Pancreas (tissue), 10 donors: ENCODE measurements at regions of chr1 and their contacts with region 1.

Region 1: DNA sequence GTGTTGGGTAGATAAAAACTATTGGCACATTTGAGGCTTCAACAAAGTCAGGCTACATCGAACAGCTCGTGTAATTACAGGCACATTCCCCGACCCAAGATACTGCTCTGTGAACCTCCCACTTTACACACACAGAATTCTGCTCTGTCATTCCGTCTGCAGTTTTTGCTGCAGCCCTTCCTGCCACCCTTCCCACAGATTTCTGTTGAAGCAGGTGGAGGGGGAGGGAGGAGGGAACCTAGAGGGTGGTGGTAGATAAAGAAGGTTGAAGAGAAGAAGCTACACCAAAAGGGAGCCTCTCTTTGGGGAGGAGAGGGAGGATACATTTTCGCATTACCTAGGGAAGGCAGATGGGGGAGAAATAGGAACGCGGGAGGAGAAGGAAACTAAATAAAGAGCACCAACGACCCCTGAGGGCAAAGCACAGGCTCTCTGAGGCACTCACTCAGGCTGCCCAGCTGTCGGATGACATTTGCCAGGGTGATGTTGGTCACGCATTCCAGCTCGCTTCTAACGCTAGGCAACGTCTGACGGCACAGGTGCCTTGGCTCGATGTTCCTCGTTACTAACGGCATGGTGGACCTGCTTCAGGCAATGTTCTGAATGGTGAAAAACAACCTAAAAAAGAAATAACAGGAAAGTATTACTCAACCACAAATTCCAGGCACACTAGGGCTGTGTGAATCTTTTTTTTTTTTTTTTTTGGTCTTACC is 36.0 kb downstream of the GPR3 start:
- DNase-seq: no peak
- ATAC-seq: peak in 3 of 4 donors; percentile 37 to 72 (median 70)
- H3K4me3 ChIP-seq: no peak overlapping the region
- H3K27ac ChIP-seq: no peak overlapping the region
- H3K4me1 ChIP-seq: peaks cover under 1 to 25% (median 6%) of the 10 kb centered on the region in 3 donors
- H3K27me3 ChIP-seq: no peaks in the 10 kb centered on the region
- CTCF ChIP-seq: no peak

Region 2: DNA sequence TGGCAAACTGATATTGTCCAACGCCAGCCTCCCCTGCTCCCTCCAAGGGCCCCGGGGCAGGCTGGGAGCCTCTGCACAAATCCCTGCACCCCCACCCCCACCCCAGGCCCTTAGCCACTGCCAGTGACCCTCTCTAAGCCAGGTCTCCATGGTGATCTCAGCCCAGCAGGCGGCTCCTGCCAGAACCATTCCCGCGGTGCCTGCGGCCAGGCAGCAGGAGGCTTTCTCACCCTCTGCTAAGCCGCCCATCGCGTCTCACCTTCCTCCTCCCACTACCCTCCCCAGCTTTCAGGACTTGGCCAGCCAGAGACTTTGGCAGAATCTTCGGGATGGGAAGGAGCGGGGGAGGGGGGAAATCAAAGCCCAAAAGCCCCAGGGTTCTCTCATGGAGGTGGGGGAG is 108.3 kb after region 1 on chr1:
- intact Hi-C with region 1: loop called in 1 of 3 experiments (anchors 10 kb)
- DNase-seq: peak in 2 of 6 donors; percentile 59
- ATAC-seq: peak; percentile 71 to 82 (median 77)
- H3K4me3 ChIP-seq: no peak overlapping the region
- H3K27ac ChIP-seq: peak overlapping the region in 1 of 4 donors; percentile 12
- H3K4me1 ChIP-seq: peaks cover 0 to 4% (median 4%) of the 10 kb centered on the region in 3 donors
- H3K27me3 ChIP-seq: no peaks in the 10 kb centered on the region
- CTCF ChIP-seq: no peak